Gastrocnemius medialis (tissue), 4 donors: ENCODE measurements at regions of chr15 and their contacts with region 1.

Region 1: GRCh38 chr15:44584162-44584749 is 47.3 kb downstream of the EIF3J start:
- DNase-seq: peak in 1 of 2 donors; percentile 28
- ATAC-seq: no peak
- H3K4me3 ChIP-seq: no peak overlapping the region
- H3K27ac ChIP-seq: no peak overlapping the region
- H3K4me1 ChIP-seq: no peaks in the 10 kb centered on the region
- H3K27me3 ChIP-seq: no peaks in the 10 kb centered on the region
- CTCF ChIP-seq: peak in 2 of 5 experiments; percentile 16 to 33
- POLR2A ChIP-seq: no peak

Region 2: DNA sequence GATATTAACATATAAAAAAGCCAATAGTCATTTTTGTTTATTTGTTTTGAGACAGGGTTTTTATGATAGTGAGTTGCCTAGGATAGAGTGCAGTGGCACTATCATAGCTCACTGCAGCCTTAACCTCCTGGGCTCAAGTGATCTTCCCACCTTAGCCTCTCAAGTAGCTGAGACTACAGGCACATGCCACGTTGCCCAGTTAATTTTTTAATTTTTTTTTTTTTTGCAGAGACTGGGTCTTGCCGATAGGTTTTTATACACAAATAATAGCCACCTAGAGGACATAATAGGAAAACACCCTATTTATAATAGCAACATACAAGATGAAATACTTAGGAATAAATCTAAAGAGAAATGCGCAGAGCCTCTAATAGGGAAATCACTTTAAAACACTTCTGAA is 34.0 kb before region 1 on chr15:
- in situ Hi-C with region 1: no loop called
- intact Hi-C with region 1: no loop called
- DNase-seq: no peak
- ATAC-seq: no peak
- H3K4me3 ChIP-seq: no peak overlapping the region
- H3K27ac ChIP-seq: peak overlapping the region in 1 of 4 donors; percentile 27
- H3K4me1 ChIP-seq: peaks cover 33 to 35% of the 10 kb centered on the region in 2 donors
- H3K27me3 ChIP-seq: no peaks in the 10 kb centered on the region
- CTCF ChIP-seq: peak in 2 of 5 experiments; percentile 17 to 27
- POLR2A ChIP-seq: no peak

Region 3: GRCh38 chr15:44636976-44637375 is 52.7 kb after region 1 on chr15:
- in situ Hi-C with region 1: no loop called
- intact Hi-C with region 1: loop called (anchors 5 kb)
- DNase-seq: no peak
- ATAC-seq: no peak
- H3K4me3 ChIP-seq: no peak overlapping the region
- H3K27ac ChIP-seq: no peak overlapping the region
- H3K4me1 ChIP-seq: no peaks in the 10 kb centered on the region
- H3K27me3 ChIP-seq: no peaks in the 10 kb centered on the region
- CTCF ChIP-seq: no peak
- POLR2A ChIP-seq: no peak

Region 4: DNA sequence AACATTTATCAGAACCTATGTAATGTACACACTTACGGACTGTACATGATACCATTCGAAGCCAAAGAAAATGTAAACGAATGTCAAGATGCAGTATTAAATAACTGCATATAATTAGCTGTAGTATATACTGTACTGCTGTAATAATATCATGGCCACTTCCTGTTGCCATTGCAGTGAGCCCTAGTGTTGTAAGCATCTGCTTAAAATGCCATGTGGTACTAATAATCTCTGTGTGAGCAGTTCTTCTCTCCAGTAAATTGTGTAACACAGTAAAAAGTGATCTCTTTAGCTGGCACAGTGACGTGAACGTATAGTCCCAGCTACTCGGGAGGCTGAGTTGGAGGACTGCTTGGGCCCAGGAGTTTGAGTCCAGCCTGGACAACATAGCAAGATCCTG is 70.6 kb after region 1 on chr15:
- in situ Hi-C with region 1: no loop called
- intact Hi-C with region 1: no loop called
- DNase-seq: no peak
- ATAC-seq: no peak
- H3K4me3 ChIP-seq: no peak overlapping the region
- H3K27ac ChIP-seq: no peak overlapping the region
- H3K4me1 ChIP-seq: peaks cover 6 to 8% of the 10 kb centered on the region in 2 donors
- H3K27me3 ChIP-seq: no peaks in the 10 kb centered on the region
- CTCF ChIP-seq: no peak
- POLR2A ChIP-seq: no peak

Region 5: GRCh38 chr15:44728576-44729407 is 144.5 kb after region 1 on chr15:
- in situ Hi-C with region 1: loop called in 3 of 4 experiments (anchors 25 kb)
- intact Hi-C with region 1: no loop called
- DNase-seq: peak; percentile 90 to 96
- ATAC-seq: peak; percentile 98
- H3K4me3 ChIP-seq: peak overlapping the region; percentile 60 to 98 (median 84)
- H3K27ac ChIP-seq: peak overlapping the region; percentile 87 to 100 (median 96)
- H3K4me1 ChIP-seq: peaks cover 16 to 24% of the 10 kb centered on the region in 2 donors
- H3K27me3 ChIP-seq: no peaks in the 10 kb centered on the region
- CTCF ChIP-seq: no peak
- POLR2A ChIP-seq: peak; percentile 80 to 87